ENCODE measurements at regions of chr9 and their contacts with region 1.

Region 1: DNA sequence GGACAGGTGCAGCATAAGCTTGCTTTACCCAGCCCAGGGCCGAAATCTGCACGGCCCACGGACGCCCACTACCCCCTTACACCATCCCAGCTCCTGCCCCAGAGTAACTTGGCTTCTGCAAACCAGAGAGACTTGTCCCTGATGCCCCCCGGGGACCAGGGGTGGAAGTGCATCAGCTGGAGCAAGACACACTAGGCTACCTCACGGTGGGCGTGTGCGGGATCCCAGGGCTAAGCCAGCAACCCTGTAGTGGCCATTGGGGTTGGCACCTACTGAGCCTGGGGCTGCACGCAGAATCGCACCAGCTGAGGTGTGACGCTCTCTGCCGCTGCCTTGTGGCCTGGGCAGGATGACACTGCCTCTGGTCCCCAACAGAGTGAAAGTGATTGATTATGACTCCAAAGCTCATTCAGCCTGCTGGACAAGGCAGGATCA is 6.1 kb upstream of the ZNF79 start:
- DNase-seq: peak; percentile 82
- ATAC-seq: peak; percentile 95
- H3K4me3 Mint-ChIP-seq: no peak overlapping the region
- H3K27ac Mint-ChIP-seq: 0 out of 2 replicates have a peak overlapping the region, but pooled peaks have one; percentile 14
- H3K4me1 Mint-ChIP-seq: peaks cover 27% of the 10 kb centered on the region
- H3K27me3 Mint-ChIP-seq: peaks cover 3% of the 10 kb centered on the region; the same call in 1 of the 2 replicates
- CTCF ChIP-seq: no peak

Region 2: GRCh38 chr9:127263664-127264063 is 154.4 kb before region 1 on chr9:
- CTCF ChIA-PET with region 1: no interaction called
- POLR2A ChIA-PET with region 1: no interaction called
- DNase-seq: no peak
- ATAC-seq: no peak
- H3K4me3 Mint-ChIP-seq: no peak overlapping the region
- H3K27ac Mint-ChIP-seq: no peak overlapping the region
- H3K4me1 Mint-ChIP-seq: peaks cover 23% of the 10 kb centered on the region
- H3K27me3 Mint-ChIP-seq: no peaks in the 10 kb centered on the region
- CTCF ChIP-seq: no peak

Region 3: DNA sequence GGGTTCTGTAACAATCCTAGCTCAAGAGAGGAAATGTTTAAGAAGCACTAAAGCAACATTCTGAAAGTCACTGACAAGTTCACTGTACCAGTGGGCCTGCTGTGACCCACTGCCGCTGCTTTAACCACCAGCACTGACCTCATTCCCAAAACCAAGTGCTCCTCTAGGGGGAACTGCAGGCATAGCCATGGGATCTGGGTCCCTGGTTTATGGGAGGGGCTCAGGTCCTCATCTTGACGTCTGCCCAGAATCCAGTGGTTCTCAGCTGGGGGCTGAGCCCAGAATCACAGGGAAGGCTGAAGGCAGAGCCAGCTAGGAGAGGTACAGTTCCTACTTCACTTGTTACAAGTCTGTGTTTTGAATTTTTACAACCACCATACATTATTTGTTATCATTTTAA is 57.2 kb before region 1 on chr9:
- CTCF ChIA-PET with region 1: interaction called, 21 read pairs
- POLR2A ChIA-PET with region 1: no interaction called
- DNase-seq: peak; percentile 65
- ATAC-seq: peak; percentile 97
- H3K4me3 Mint-ChIP-seq: no peak overlapping the region
- H3K27ac Mint-ChIP-seq: no peak overlapping the region; the same call in 1 of the 2 replicates
- H3K4me1 Mint-ChIP-seq: no peaks in the 10 kb centered on the region
- H3K27me3 Mint-ChIP-seq: no peaks in the 10 kb centered on the region
- CTCF ChIP-seq: no peak

Measured in WTC11 (cell line).